ENCODE measurements at regions of chr10 and their contacts with region 1.

Region 1: GRCh38 chr10:31928549-31929260 is at the start of gene ARHGAP12:
- H3K4me3 Mint-ChIP-seq: peak within 1 kb of the TSS; percentile 98
- H3K27ac Mint-ChIP-seq: peak within 1 kb of the TSS; percentile 96
- H3K4me1 Mint-ChIP-seq: peaks cover 28% of the 10 kb centered on the region
- H3K27me3 Mint-ChIP-seq: no peaks in the 10 kb centered on the region

Region 2: GRCh38 chr10:31656851-31657433 is 271.8 kb before region 1 on chr10:
- intact Hi-C with region 1: no loop called
- H3K4me3 Mint-ChIP-seq: no peak overlapping the region
- H3K27ac Mint-ChIP-seq: no peak overlapping the region
- H3K4me1 Mint-ChIP-seq: no peaks in the 10 kb centered on the region
- H3K27me3 Mint-ChIP-seq: peaks cover 3% of the 10 kb centered on the region

Region 3: DNA sequence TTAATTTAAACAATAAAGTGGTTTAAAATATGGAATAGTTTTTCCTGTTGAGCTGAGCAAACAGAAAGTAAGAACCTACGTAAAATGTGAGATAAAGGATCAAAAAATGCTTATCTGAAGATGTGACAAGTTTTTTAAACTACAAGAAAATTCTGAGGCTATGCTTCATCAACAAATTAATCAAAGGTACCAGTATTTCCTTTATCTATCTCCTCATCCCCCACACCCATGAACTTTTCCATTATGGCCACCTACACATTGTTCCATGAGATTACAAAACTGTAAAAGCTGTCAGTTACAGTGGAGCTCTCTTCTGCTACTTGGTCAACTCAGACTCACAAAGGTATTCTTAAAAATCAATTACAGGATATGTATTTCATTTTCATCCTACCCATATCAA is 77.5 kb before region 1 on chr10:
- intact Hi-C with region 1: no loop called
- H3K4me3 Mint-ChIP-seq: no peak overlapping the region
- H3K27ac Mint-ChIP-seq: no peak overlapping the region
- H3K4me1 Mint-ChIP-seq: no peaks in the 10 kb centered on the region
- H3K27me3 Mint-ChIP-seq: no peaks in the 10 kb centered on the region

Region 4: GRCh38 chr10:31961277-31962074 is 32.8 kb after region 1 on chr10:
- intact Hi-C with region 1: loop called (anchors 5 kb)
- H3K4me3 Mint-ChIP-seq: no peak overlapping the region
- H3K27ac Mint-ChIP-seq: peak overlapping the region; percentile 23
- H3K4me1 Mint-ChIP-seq: peaks cover 53% of the 10 kb centered on the region
- H3K27me3 Mint-ChIP-seq: peaks cover 19% of the 10 kb centered on the region

Region 5: GRCh38 chr10:32005050-32005449 is 76.3 kb after region 1 on chr10:
- intact Hi-C with region 1: loop called (anchors 10 kb)
- H3K4me3 Mint-ChIP-seq: no peak overlapping the region
- H3K27ac Mint-ChIP-seq: no peak overlapping the region
- H3K4me1 Mint-ChIP-seq: peaks cover 8% of the 10 kb centered on the region
- H3K27me3 Mint-ChIP-seq: no peaks in the 10 kb centered on the region